Stomach (tissue), 19 donors: ENCODE measurements at regions of chr4 and their contacts with region 1.

Region 1: DNA sequence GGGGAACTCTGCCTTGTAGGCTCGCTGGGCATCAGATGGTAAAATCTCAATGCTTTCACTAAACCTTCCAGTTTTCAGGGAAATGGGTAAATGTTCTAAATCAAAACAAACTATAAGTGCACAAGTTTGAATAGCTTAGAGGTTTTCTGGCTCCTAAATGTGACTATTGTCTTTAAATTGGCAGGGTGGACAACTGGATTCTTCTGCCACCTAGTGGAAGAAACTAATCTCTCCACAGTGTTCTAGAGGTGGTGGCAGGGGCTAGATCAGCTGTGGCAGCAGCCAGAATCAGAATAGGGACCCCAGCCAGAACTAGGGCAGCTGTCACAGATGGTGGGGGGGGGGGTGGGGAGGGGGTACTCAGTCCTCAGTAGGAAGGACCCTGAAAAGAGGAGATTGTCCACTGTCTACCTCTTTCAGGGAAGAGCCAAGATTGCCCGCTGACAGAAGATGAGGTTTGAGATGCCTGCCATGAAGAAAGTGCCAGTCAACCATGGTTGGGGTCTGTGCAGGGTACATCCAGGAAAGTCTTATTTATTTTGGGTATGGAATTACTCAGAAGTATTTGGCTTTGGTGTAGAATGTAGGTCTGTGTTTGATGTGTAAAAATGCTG is 201.4 kb downstream of the CCNG2 start:
- DNase-seq: peak in 1 of 2 donors; percentile 75
- H3K4me3 ChIP-seq: no peak overlapping the region
- H3K27ac ChIP-seq: no peak overlapping the region
- H3K4me1 ChIP-seq: no peaks in the 10 kb centered on the region
- H3K27me3 ChIP-seq: no peaks in the 10 kb centered on the region
- CTCF ChIP-seq: peak in 4 of 7 experiments; percentile 18 to 60 (median 52)
- EP300 ChIP-seq: no peak
- POLR2A ChIP-seq: no peak

Region 2: DNA sequence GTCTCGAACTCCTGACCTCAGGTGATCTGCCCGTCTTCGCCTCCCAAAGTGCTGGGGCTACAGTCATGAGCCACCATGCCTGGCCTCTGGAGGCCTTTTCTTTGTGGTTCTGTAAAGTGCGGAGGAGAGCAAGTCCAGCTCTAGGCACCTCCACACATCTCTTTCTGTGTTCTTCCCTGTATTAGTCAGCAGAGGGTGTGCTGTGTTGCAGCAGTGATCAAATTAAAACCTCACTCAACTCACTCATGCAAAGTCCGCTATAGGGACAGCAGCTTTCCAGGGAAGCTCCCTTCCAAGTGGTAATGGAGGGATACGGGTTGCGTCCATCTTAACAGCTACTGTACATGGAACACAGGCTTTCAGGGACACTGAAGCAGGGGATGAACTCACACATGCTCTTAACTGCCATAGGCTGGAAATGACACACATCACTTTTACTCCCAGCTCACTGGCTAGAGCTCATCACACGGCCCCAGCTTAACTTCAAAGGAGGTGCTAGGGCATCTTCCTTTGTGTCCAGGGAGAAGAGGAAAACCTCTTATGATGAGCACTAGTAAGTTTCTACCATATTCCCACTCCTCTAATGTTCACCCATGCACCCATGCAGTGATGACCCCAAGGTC is 237.4 kb before region 1 on chr4:
- intact Hi-C with region 1: no loop called
- DNase-seq: no peak
- H3K4me3 ChIP-seq: no peak overlapping the region
- H3K27ac ChIP-seq: no peak overlapping the region
- H3K4me1 ChIP-seq: no peaks in the 10 kb centered on the region
- H3K27me3 ChIP-seq: peaks cover 0 to 5% (median 0%) of the 10 kb centered on the region in 3 donors
- CTCF ChIP-seq: no peak
- EP300 ChIP-seq: no peak
- POLR2A ChIP-seq: no peak

Region 3: GRCh38 chr4:77235289-77235854 is 123.0 kb before region 1 on chr4:
- intact Hi-C with region 1: loop called (anchors 5 kb)
- DNase-seq: no peak
- H3K4me3 ChIP-seq: no peak overlapping the region
- H3K27ac ChIP-seq: no peak overlapping the region
- H3K4me1 ChIP-seq: no peaks in the 10 kb centered on the region
- H3K27me3 ChIP-seq: peaks cover 0 to 13% (median 0%) of the 10 kb centered on the region in 3 donors
- CTCF ChIP-seq: no peak
- EP300 ChIP-seq: no peak
- POLR2A ChIP-seq: no peak

Region 4: DNA sequence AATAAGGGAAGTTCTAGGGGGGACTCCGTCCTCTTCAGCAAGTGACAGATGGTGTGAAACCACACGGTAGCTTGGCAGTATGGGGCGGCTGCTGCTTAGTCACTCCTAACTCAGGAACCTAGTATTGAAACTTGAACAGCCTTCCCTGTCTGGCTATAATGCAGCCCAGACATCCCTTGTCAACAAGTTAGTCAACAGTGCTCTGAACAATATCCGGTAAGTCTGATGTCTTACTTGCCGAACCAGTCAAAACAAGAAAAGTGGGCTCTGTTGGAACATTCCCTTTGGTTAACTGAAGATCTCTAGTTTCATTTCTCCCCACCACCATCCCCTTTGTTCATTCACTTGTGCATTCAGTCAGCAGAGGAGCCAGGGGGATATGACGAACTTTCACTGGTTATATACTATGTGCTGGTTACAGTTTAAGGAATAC is 228.5 kb after region 1 on chr4:
- intact Hi-C with region 1: no loop called
- DNase-seq: peak in 1 of 2 donors; percentile 24
- H3K4me3 ChIP-seq: no peak overlapping the region
- H3K27ac ChIP-seq: no peak overlapping the region
- H3K4me1 ChIP-seq: no peaks in the 10 kb centered on the region
- H3K27me3 ChIP-seq: no peaks in the 10 kb centered on the region
- CTCF ChIP-seq: no peak
- EP300 ChIP-seq: no peak
- POLR2A ChIP-seq: no peak